ENCODE measurements at regions of chr11 and their contacts with region 1.

Region 1: GRCh38 chr11:56089697-56090096 is 3.4 kb upstream of the OR8I2 start:
- DNase-seq: no peak
- H3K4me3 Mint-ChIP-seq: no peak overlapping the region
- H3K27ac Mint-ChIP-seq: no peak overlapping the region
- H3K4me1 Mint-ChIP-seq: no peaks in the 10 kb centered on the region
- H3K27me3 Mint-ChIP-seq: no peaks in the 10 kb centered on the region
- CTCF ChIP-seq: peak; percentile 26

Region 2: DNA sequence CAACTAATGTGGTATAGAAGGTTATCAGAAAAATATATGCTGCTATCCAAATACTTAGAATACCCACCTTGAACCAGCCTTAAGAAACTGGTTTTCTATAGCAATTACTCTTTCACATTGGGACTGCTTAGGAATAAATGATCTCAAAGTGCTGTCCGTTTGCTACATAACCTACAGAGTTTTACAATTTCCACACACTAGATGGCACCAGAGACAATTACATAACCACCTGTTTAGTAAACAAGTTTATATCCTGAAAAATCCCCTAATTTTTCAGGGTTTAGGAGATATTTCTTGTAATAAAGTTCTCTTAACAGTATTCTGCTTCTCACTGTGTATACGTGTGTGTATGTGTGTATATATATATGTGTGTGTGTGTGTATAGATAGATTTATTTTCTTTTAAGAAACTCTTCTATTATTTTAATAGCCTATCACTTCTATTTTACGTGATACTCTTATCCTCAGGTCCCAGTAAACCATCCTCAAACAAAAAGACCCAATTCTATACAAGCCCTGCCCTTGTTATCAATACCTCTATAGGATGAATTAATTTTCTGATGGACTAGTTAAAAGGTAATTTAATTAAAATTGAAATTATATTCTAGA is 146.8 kb before region 1 on chr11:
- CTCF ChIA-PET with region 1: interaction called, 4 read pairs
- POLR2A ChIA-PET with region 1: no interaction called
- intact Hi-C with region 1: loop called (anchors 1 kb)
- DNase-seq: peak; percentile 23
- H3K4me3 Mint-ChIP-seq: no peak overlapping the region
- H3K27ac Mint-ChIP-seq: no peak overlapping the region
- H3K4me1 Mint-ChIP-seq: no peaks in the 10 kb centered on the region
- H3K27me3 Mint-ChIP-seq: no peaks in the 10 kb centered on the region
- CTCF ChIP-seq: peak; percentile 48

Measured in MCF 10A (cell line).